K562 (cell line): ENCODE measurements at regions of chr10 and their contacts with region 1.

Region 1: GRCh38 chr10:24642622-24643417 is 80.9 kb downstream of the ARHGAP21 start:
- DNase-seq: peak; percentile 21 to 72 (median 34)
- ATAC-seq: peak; percentile 92
- H3K4me3 ChIP-seq: no peak overlapping the region
- H3K27ac ChIP-seq: no peak overlapping the region
- H3K4me1 ChIP-seq: peaks cover 0 to 29% of the 10 kb centered on the region in 2 experiments; a peak in 4 of 5 replicates
- H3K27me3 ChIP-seq: no peaks in the 10 kb centered on the region
- CTCF ChIP-seq: peak; percentile 61 to 84 (median 80)
- EP300 ChIP-seq: no peak
- POLR2A ChIP-seq: no peak
- RAD21 ChIP-seq: peak; percentile 89 to 93

Region 2: DNA sequence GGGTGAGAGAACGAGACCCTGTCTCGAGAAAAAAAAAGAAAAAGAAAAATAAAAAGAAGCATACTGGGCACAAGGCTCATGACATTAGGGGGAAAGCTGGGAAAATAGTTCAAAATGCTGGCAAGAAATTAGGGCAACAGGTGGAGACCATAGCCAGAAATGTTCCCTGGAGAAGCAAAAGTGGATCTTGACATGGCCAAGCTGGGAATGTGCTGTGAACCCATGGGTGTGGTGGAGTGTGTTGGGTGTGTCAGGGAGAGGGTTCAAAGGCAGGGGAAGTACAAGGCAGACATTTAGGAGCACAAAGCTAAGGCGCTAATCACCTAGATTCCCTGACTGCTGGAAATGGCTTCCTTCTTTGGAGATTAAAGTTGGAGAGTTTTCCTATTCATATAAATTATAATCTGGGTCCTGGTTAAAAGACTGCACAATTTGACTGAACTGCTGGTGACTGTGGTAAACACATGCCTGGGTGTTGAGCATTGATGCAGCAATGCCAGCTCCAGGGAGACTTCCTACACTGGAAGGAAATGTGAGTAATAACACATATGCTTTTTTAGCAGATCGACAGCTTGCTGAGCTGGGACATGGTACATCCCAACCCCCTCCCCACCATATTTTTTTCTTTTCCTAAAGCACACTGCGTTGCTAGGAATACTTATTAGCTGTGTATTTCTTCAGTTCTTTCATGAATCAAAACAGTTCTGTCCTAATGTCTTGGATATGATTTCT is 151.0 kb after region 1 on chr10:
- CTCF ChIA-PET with region 1: no interaction called
- POLR2A ChIA-PET with region 1: no interaction called
- in situ Hi-C with region 1: no loop called
- intact Hi-C with region 1: loop called (anchors 10 kb)
- DNase-seq: no peak
- ATAC-seq: no peak
- H3K4me3 ChIP-seq: no peak overlapping the region
- H3K27ac ChIP-seq: no peak overlapping the region
- H3K4me1 ChIP-seq: peaks cover 0 to 7% of the 10 kb centered on the region in 2 experiments; a peak in 2 of 5 replicates
- H3K27me3 ChIP-seq: no peaks in the 10 kb centered on the region
- CTCF ChIP-seq: no peak
- EP300 ChIP-seq: no peak
- POLR2A ChIP-seq: no peak
- RAD21 ChIP-seq: no peak

Region 3: DNA sequence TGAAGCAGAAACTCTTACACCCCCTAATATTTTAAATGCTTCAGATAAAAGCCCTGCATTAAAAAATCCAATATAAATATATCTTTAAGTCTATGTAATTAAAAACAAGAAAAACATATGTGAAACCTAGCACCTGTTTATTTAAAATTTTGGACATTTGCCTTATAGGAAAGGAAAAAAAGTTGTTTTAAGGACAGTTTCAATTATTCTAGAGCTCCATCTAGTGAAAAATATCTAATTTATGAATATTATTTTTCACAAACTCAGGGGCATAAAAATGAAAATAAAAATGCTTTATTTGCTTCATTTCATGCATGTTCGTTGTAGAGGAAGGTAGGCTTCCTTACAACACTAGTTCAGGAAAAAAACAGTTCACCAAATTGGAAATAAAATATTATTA is 347.0 kb after region 1 on chr10:
- CTCF ChIA-PET with region 1: interaction called, 4 read pairs
- POLR2A ChIA-PET with region 1: no interaction called
- in situ Hi-C with region 1: no loop called
- intact Hi-C with region 1: loop called (anchors 2 kb)
- DNase-seq: no peak
- ATAC-seq: no peak
- H3K4me3 ChIP-seq: no peak overlapping the region
- H3K27ac ChIP-seq: no peak overlapping the region
- H3K4me1 ChIP-seq: peaks cover 9 to 11% of the 10 kb centered on the region in 2 experiments
- H3K27me3 ChIP-seq: no peaks in the 10 kb centered on the region
- CTCF ChIP-seq: peak in 1 of 3 experiments; percentile 31; a peak in 2 of 6 replicates
- EP300 ChIP-seq: no peak
- POLR2A ChIP-seq: no peak
- RAD21 ChIP-seq: peak; percentile 20 to 52; a peak in 3 of 4 replicates